A673 (cell line): ENCODE measurements at regions of chr6 and their contacts with region 1.

Region 1: DNA sequence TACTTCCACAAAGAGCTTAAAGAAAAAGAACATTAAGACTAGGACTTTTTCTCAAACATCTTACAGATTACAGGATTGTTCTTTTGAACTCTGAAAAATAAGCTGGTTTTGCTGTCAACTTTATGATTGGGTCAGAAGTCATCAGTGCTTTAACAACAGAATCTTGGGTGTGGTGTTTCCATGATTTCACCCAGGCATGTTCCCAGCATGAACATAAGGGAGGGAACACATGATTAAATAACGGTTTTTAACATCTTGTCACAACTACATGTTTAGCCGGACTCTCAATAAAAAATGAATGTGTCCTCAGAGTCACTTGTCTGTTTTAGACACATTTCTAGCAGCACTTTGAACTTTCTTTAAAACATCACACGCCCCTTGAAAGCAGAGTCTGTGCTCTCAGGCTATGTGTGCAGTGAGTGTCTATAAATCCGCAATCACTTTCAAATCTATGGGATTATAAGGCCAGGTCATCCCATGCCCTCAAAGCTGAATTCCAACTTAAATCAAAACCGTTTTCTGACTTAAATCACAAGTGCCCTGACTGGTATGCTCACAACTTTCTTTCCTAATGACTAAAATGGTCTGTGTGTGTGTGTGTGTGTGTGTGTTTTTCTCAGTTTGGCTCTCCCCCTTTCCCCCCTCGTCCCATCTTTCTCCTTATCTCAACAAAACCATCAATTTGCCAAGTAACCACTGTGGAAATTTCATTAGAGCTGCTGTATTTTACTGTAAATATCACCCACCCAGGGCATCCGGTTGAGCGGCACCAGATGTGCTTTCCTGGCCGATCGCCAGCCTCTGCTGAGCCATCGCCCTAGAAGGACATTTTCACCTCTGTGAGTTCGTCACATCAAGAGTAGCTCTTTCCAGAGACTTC is 216.8 kb upstream of the DTNBP1 start:
- DNase-seq: peak; percentile 83
- H3K4me3 ChIP-seq: no peak overlapping the region
- H3K27ac ChIP-seq: no peak overlapping the region
- H3K4me1 ChIP-seq: peaks cover 18% of the 10 kb centered on the region
- H3K27me3 ChIP-seq: no peaks in the 10 kb centered on the region
- CTCF ChIP-seq: no peak

Region 2: DNA sequence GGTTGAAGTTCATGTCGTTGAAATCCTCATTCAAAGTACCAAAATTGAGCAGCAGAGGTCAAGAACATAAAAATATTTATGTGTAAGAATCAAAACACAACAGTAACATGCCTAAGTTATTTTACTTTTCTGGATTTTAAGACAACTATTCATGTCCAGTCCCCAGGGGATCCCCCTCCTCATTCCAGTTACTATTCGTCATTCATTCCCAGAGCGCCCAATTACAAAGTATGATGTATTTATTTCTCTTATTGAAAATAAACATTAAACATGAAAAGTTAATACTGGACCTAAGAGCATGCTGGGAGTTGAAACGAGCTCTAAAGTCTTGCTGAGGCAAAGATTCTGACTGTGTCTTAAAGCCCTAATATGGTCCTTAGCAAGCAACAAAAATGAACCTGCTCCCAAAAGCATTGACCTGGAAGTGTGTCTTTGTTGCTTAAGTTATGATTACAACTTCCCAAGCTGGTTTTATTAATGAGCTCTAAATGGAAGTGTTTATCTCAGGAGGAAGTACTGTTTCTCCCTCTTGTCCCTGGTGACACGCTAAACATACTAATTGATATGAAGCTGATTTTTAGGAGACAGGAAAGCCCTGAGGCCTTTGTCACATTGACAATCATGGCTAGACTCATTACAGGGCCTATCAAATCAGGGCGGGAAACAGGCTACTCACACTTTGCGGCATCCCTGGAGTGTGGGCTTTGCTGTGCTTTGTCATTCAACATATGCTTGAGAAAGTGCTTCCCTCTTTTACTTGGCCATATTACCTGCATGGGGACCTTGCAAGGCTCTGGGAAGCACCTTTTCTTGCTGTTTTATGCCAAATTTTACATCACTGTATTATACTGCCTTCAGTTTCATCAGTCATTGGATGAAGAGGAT is 24.6 kb before region 1 on chr6:
- CTCF ChIA-PET with region 1: no interaction called
- POLR2A ChIA-PET with region 1: interaction called, 11 read pairs
- intact Hi-C with region 1: no loop called
- DNase-seq: no peak
- H3K4me3 ChIP-seq: no peak overlapping the region
- H3K27ac ChIP-seq: no peak overlapping the region
- H3K4me1 ChIP-seq: no peaks in the 10 kb centered on the region
- H3K27me3 ChIP-seq: no peaks in the 10 kb centered on the region
- CTCF ChIP-seq: no peak

Region 3: DNA sequence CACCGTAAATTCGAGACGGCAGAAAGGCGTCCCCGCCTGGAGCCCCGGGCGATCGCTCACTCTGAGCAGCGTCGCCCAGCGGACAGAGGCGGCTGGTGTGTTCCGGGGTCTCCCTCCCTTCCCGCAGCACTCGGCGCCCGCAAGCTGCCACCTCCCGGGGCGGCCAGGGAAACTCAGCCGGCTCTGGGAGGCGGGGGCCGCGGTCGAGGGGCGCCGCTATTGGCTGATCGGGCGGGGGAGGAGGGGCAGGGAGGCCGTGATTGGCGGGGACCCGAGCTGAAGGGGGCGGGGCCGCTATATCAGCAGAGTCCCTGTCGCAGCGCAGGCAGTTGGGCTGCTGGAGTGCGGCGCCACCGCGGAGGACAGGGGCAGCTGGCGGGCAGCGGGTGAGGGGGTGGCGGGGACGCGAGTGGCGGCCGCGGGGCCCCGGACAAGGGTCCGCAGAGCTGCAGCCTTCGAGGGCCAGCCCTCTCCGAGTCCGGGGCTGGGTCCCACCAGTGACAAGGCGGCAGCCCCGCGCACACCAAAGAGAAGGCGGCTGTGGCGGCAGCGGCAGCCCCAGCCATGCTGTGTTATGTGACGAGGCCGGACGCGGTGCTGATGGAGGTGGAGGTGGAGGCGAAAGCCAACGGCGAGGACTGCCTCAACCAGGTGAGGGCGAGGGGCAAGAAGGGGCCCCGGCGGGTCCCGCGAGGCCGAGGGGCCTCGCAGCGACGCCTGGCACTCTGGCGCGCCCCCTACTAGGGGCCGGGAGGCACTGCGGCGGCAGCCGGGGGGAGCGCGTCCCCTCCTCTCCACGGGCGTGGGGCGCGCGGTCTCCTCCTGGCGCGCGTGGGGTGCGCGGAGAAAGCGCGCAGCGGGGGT is 249.4 kb after region 1 on chr6 and contains the start of gene MYLIP:
- CTCF ChIA-PET with region 1: no interaction called
- POLR2A ChIA-PET with region 1: interaction called, 19 read pairs
- intact Hi-C with region 1: no loop called
- DNase-seq: peak; percentile 98
- H3K4me3 ChIP-seq: peak within 1 kb of the TSS; percentile 96
- H3K27ac ChIP-seq: peak within 1 kb of the TSS; percentile 95
- H3K4me1 ChIP-seq: peaks cover 22% of the 10 kb centered on the region
- H3K27me3 ChIP-seq: no peaks in the 10 kb centered on the region
- CTCF ChIP-seq: peak; percentile 75
- total RNA-seq, gene MYLIP: 22.4 and 24.5 TPM in 2 replicates

Region 4: DNA sequence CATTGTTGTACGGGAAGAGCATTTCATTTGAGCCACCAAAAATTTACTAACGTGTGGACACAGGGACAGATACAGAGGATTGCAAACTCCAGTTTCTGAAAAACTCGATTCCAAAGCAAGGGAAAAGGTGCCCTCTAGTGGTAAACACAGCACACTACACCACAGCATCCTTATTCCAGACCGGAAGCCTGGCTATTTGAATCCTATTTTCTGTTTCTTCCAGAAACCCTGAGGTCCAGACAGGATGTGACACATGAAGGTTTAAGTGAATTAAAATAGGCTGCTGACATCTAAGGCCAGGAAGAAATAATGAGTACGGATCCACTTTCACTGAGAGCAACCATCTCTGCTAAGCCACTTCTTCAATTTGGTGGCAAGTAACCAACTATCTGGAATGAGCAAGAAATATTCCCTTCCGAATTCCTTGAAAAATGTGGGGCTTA is 327.0 kb after region 1 on chr6:
- CTCF ChIA-PET with region 1: interaction called, 12 read pairs
- POLR2A ChIA-PET with region 1: no interaction called
- intact Hi-C with region 1: no loop called
- DNase-seq: peak; percentile 87
- H3K4me3 ChIP-seq: no peak overlapping the region
- H3K27ac ChIP-seq: no peak overlapping the region
- H3K4me1 ChIP-seq: peaks cover 16% of the 10 kb centered on the region
- H3K27me3 ChIP-seq: no peaks in the 10 kb centered on the region
- CTCF ChIP-seq: peak; percentile 95